Pancreas (tissue), 10 donors: ENCODE measurements at regions of chrX and their contacts with region 1.

Region 1: GRCh38 chrX:155068165-155068564 is 2.8 kb downstream of the CMC4 start:
- DNase-seq: no peak
- ATAC-seq: no peak
- H3K4me3 ChIP-seq: no peak overlapping the region
- H3K27ac ChIP-seq: no peak overlapping the region
- H3K4me1 ChIP-seq: peaks cover 0 to 4% (median 0%) of the 10 kb centered on the region in 3 donors
- H3K27me3 ChIP-seq: no peaks in the 10 kb centered on the region
- CTCF ChIP-seq: no peak

Region 2: DNA sequence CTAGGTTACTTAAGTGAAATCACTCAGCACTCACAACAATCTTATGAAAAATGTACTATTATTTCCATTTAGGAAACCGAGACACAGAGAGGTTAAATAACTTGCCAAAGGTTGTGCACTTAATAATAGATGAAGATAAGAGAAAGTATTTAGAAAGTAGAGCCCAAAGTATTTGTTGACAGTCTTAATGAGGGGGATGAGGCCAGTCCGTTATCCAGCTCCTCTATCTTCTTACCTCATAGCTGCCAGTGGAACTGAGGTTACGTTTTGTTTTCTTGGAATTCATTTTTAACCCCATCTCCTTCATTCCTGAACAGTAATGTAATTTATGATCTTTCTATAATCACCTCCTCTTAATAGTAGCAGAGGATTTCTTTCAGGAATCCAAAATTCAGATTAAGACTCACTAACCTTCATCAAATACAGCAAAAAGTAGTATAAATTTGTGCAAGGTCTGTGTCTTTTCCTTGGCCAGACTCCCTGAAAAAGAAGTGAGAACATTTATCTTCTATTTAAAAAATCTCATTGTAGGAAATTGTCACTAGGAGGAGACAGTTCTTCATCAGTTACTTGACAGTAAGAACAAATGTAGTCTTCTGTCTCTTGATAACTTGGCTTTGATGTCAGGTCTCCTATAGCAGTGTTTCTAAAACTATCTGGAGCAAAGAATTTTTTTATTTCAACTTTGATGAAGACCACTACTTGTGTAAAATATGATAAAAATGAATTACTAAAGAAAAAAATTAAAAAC is 81.2 kb before region 1 on chrX:
- intact Hi-C with region 1: loop called in 1 of 3 experiments (anchors 5 kb)
- DNase-seq: no peak
- ATAC-seq: peak in 2 of 4 donors; percentile 20 to 51
- H3K4me3 ChIP-seq: no peak overlapping the region
- H3K27ac ChIP-seq: no peak overlapping the region
- H3K4me1 ChIP-seq: peaks cover 0 to 15% (median 10%) of the 10 kb centered on the region in 3 donors
- H3K27me3 ChIP-seq: no peaks in the 10 kb centered on the region
- CTCF ChIP-seq: no peak

Region 3: GRCh38 chrX:155001873-155002272 is 66.3 kb before region 1 on chrX:
- intact Hi-C with region 1: no loop called
- DNase-seq: no peak
- ATAC-seq: no peak
- H3K4me3 ChIP-seq: no peak overlapping the region
- H3K27ac ChIP-seq: no peak overlapping the region
- H3K4me1 ChIP-seq: no peaks in the 10 kb centered on the region
- H3K27me3 ChIP-seq: no peaks in the 10 kb centered on the region
- CTCF ChIP-seq: no peak

Region 4: DNA sequence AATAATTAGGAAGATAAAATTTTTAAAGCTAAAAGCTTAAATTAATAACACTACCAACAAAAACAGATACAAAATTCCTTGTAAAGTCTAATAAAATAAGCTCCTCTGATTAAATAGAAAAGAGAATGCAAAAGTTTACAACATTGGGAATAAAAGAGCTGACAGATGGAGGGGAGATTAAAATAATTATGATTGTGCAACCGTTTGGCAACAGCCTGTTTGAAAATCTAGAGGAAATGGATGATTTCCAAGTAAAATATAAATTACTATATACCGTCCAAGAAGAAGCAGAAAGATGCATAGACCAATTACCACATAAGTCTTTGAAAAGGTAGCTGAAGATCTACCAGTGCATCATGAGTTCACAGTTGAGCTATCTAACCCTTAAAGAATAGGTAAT is 101.7 kb after region 1 on chrX:
- intact Hi-C with region 1: no loop called
- DNase-seq: no peak
- ATAC-seq: no peak
- H3K4me3 ChIP-seq: no peak overlapping the region
- H3K27ac ChIP-seq: no peak overlapping the region
- H3K4me1 ChIP-seq: no peaks in the 10 kb centered on the region
- H3K27me3 ChIP-seq: no peaks in the 10 kb centered on the region
- CTCF ChIP-seq: no peak

Region 5: GRCh38 chrX:155434906-155435743 is 367.0 kb after region 1 on chrX:
- intact Hi-C with region 1: no loop called
- DNase-seq: peak in 1 of 6 donors; percentile 18
- ATAC-seq: peak in 1 of 4 donors; percentile 41
- H3K4me3 ChIP-seq: no peak overlapping the region
- H3K27ac ChIP-seq: no peak overlapping the region
- H3K4me1 ChIP-seq: no peaks in the 10 kb centered on the region
- H3K27me3 ChIP-seq: no peaks in the 10 kb centered on the region
- CTCF ChIP-seq: no peak